Right cardiac atrium (tissue), 5 donors: ENCODE measurements at regions of chr12 and their contacts with region 1.

Region 1: DNA sequence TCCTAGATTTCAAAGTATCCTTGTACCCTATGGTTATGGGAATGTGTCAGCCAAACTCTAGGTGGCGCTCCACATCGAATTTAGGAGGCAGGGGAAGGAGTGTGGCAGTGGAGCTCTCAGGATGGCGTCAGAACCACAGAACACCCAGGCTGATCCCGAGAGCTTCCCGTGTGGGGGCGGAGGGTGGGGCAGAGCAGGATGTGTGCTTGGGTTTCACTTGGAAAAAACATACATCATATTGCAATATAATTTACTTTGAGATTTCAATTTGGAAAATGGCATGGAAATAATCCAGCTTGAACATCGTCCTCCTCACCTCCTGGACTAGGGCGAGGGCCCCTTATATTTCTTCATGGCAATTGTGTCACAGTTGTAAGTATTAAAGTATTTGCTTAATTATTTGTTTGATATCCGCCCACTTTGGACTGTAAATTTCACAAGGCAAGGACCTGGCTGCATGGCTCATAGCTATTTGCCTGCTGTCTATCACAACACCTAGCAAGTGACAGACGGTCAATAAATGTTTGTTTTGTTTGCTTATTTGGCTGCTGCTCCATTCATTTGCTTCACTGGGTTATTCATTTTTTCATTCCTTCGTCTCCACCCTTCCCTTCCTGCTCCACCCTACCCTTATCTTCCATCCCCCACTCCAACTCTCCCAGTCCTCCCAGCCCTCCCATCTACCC is 221.5 kb upstream of the HMGA2 start:
- DNase-seq: peak; percentile 81 to 89 (median 83)
- ATAC-seq: peak; percentile 96 to 99
- H3K4me3 ChIP-seq: peak overlapping the region; percentile 34
- H3K27ac ChIP-seq: no peak overlapping the region
- H3K4me1 ChIP-seq: peaks cover 2% of the 10 kb centered on the region
- H3K27me3 ChIP-seq: no peaks in the 10 kb centered on the region

Region 2: DNA sequence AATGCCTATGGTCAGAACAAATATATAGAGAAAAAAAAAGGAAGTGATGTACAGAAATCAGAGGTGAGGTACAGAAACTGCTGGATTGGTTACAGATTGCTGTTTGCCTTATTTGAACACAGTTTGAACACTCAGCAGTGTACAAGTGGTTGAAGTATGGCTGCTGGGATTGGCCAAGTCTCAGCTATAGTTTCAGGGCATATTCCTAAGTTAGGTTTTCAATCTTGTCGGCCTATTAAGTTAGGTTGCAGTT is 381.4 kb after region 1 on chr12:
- intact Hi-C with region 1: loop called in 1 of 4 experiments (anchors 5 kb)
- DNase-seq: no peak
- ATAC-seq: no peak
- H3K4me3 ChIP-seq: no peak overlapping the region
- H3K27ac ChIP-seq: no peak overlapping the region
- H3K4me1 ChIP-seq: no peaks in the 10 kb centered on the region
- H3K27me3 ChIP-seq: no peaks in the 10 kb centered on the region

Region 3: GRCh38 chr12:66423266-66423665 is 820.5 kb after region 1 on chr12:
- intact Hi-C with region 1: no loop called
- DNase-seq: no peak
- ATAC-seq: no peak
- H3K4me3 ChIP-seq: no peak overlapping the region
- H3K27ac ChIP-seq: no peak overlapping the region
- H3K4me1 ChIP-seq: no peaks in the 10 kb centered on the region
- H3K27me3 ChIP-seq: no peaks in the 10 kb centered on the region